ENCODE measurements at regions of chr17 and their contacts with region 1.

Region 1: DNA sequence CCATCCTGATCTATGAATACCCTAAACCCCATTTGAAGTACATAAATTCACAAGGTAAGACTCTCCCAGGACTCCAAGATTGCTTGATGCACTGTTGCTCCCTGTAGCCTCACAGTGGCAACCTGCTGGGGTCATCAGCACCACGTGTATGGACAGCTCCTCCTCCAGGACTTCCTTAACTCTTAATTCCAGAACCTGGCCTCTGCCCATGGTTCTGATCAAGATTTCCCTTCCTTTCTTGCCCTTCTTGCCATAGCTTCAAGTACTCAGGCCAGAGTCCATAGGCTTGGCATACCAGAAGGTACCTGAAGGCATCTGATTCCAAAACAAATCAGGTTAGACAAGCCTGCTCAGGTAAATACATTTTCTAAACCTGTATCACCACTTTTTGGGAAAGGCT is 33.9 kb upstream of the NLK start:
- DNase-seq: no peak
- H3K4me3 Mint-ChIP-seq: no peak overlapping the region
- H3K27ac Mint-ChIP-seq: no peak overlapping the region
- H3K4me1 Mint-ChIP-seq: peaks cover 2% of the 10 kb centered on the region
- H3K27me3 Mint-ChIP-seq: peaks cover 18% of the 10 kb centered on the region

Region 2: GRCh38 chr17:28097901-28098300 is 89.4 kb after region 1 on chr17:
- intact Hi-C with region 1: loop called (anchors 10 kb)
- DNase-seq: no peak
- H3K4me3 Mint-ChIP-seq: no peak overlapping the region
- H3K27ac Mint-ChIP-seq: no peak overlapping the region
- H3K4me1 Mint-ChIP-seq: no peaks in the 10 kb centered on the region
- H3K27me3 Mint-ChIP-seq: no peaks in the 10 kb centered on the region

Measured in activated CD4-positive, alpha-beta T cell treated with anti-CD3 and anti-CD28 coated beads, Interleukin-2, amount 10 ng/mL, durations not matched to agents 24 days and 14 days (primary cell).